ENCODE measurements at regions of chr7 and their contacts with region 1.

Region 1: DNA sequence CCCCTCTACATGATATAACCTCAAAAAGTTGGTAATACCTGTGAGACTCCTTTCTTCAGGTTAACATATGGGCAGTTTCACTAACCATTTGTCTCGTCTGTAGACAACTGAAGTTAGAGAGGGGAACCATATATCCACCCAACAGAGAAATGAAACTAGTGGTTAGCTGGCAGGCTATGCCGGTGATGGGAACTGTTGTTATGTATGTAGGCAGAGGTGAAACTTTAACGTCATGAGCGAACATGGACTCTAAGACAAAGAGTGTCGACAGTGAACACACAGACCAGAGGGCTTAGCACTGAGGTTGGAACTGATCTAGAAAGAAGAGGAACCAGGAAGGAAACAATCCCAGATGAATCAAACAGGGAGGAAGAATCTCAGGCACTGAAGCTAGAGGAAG is 112.4 kb downstream of the ELMO1 start:
- H3K4me3 Mint-ChIP-seq: peak overlapping the region; percentile 39
- H3K27ac Mint-ChIP-seq: peak overlapping the region; percentile 64
- H3K4me1 Mint-ChIP-seq: peaks cover 56% of the 10 kb centered on the region
- H3K27me3 Mint-ChIP-seq: no peaks in the 10 kb centered on the region

Region 2: DNA sequence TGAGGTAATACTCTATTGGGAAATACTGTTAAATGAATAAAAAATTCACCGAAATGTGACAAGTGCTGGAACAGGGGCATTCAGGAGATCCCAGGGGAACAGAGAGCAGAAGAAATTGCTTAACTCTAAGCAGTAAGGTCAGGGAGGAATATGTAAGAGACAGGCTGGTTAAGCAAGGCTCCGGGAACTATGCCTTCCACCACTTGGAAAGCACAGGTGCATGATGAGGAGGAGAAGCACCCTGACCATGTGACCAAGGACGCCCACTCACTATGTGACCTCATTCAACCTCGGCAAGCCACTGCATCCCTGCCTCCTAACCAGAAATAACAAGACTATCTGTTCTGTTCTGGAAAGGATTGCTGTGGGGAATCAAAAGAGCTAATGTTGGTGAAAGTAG is 106.0 kb before region 1 on chr7:
- intact Hi-C with region 1: no loop called
- H3K4me3 Mint-ChIP-seq: no peak overlapping the region
- H3K27ac Mint-ChIP-seq: no peak overlapping the region
- H3K4me1 Mint-ChIP-seq: peaks cover 10% of the 10 kb centered on the region
- H3K27me3 Mint-ChIP-seq: no peaks in the 10 kb centered on the region

Region 3: DNA sequence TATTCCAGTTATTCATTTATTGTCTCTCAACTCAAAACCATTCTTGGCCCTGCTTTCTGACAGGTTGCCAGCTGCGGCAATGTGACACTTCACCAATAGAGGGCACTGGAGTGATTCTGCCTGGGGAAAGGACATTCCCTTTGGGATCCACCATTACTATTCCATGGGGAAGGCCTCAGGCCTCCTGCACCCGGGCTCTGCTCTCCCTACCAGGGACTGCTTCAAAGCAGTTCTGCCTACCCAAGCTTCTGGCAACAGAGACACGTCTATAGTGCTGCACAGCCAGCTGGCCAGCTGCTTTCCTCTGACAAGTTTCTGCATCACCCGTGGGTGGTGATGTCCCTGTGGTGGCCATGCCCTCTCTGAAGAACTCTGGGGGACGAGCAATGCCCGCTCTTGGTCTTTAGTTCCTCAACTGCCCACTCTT is 51.4 kb before region 1 on chr7:
- intact Hi-C with region 1: loop called (anchors 10 kb)
- H3K4me3 Mint-ChIP-seq: no peak overlapping the region
- H3K27ac Mint-ChIP-seq: peak overlapping the region; percentile 77
- H3K4me1 Mint-ChIP-seq: peaks cover 76% of the 10 kb centered on the region
- H3K27me3 Mint-ChIP-seq: no peaks in the 10 kb centered on the region

Measured in dendritic cell treated with granulocyte-macrophage colony-stimulating factor and Interleukin-4, amounts not matched to agents 40 ng/mL and 50 ng/mL, for 4 days (primary cell).